ENCODE measurements at regions of chr15 and their contacts with region 1.

Region 1: GRCh38 chr15:34737477-34737876 is 17.3 kb downstream of the GJD2 start:
- DNase-seq: peak in 3 of 5 donors; percentile 26 to 46 (median 33)
- ATAC-seq: peak; percentile 93 to 97 (median 96)
- H3K4me3 ChIP-seq: no peak overlapping the region
- H3K27ac ChIP-seq: peak overlapping the region in 6 of 12 donors; percentile 14 to 47 (median 30)
- H3K4me1 ChIP-seq: peaks cover 0 to 5% (median 0%) of the 10 kb centered on the region in 12 donors
- H3K27me3 ChIP-seq: peaks cover 0 to 3% (median 0%) of the 10 kb centered on the region in 9 donors
- CTCF ChIP-seq: no peak
- POLR2A ChIP-seq: no peak

Region 2: GRCh38 chr15:34637305-34637704 is 100.2 kb before region 1 on chr15:
- intact Hi-C with region 1: no loop called
- DNase-seq: no peak
- ATAC-seq: no peak
- H3K4me3 ChIP-seq: no peak overlapping the region
- H3K27ac ChIP-seq: no peak overlapping the region
- H3K4me1 ChIP-seq: no peaks in the 10 kb centered on the region
- H3K27me3 ChIP-seq: no peaks in the 10 kb centered on the region
- CTCF ChIP-seq: no peak
- POLR2A ChIP-seq: no peak

Region 3: DNA sequence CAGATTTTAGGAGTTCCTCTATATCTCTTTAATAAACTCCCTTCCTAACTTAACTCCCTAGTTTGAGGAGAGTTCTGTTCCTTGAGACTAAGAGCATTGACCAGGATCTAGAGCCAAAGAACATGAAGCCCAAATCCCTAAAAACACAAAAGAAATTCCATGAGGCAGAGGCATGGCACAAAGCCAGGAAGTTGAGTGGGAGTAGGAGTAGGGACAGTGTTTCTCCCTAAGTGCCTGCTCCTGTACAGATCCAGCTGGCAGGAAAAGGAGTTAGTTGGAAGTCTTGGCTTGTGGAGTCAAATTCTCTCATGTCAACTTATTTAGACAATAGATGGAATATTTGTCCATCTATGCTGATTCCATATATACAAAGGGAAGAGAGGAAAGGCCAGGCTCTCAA is 46.5 kb after region 1 on chr15:
- intact Hi-C with region 1: loop called in 1 of 10 experiments (anchors 5 kb)
- DNase-seq: no peak
- ATAC-seq: no peak
- H3K4me3 ChIP-seq: no peak overlapping the region
- H3K27ac ChIP-seq: no peak overlapping the region
- H3K4me1 ChIP-seq: no peaks in the 10 kb centered on the region
- H3K27me3 ChIP-seq: no peaks in the 10 kb centered on the region
- CTCF ChIP-seq: no peak
- POLR2A ChIP-seq: no peak